ENCODE measurements at regions of chr21 and their contacts with region 1.

Region 1: GRCh38 chr21:45554477-45555175 is 12.4 kb upstream of the SLC19A1 start:
- DNase-seq: peak; percentile 28
- ATAC-seq: peak; percentile 78
- H3K4me3 ChIP-seq: peak overlapping the region; percentile 53 to 69
- H3K27ac ChIP-seq: peak overlapping the region; percentile 63; the same call in 1 of the 2 replicates
- H3K4me1 ChIP-seq: peaks cover 6% of the 10 kb centered on the region
- H3K27me3 ChIP-seq: no peaks in the 10 kb centered on the region
- CTCF ChIP-seq: peak; percentile 81

Region 2: DNA sequence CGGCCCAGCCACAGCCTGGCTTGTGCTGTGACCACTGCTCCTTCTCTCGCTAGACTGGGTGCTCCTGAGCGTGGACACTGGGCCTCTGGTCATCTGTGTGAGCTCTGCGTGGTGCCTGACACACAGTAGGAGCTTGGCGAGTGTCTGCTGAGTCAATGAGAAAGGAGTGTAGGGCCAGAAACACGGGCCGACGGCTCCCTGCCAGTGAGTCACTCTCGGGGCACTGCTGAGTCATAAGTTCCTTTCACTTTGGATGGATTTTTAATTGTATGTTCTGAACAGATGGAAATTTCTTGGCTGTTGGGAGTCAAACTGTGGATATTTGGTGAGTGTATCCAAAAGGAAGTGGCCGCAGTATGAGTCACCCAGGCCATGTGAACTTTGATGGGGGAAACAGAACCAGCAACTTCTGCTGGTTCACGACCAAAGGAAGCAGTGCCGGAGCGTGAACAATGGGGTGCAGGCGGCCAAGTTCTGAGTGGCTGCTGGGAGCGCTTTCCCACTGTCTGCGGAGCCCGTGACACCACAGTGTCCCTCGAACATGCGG is 190.6 kb before region 1 on chr21:
- CTCF ChIA-PET with region 1: no interaction called
- POLR2A ChIA-PET with region 1: no interaction called
- in situ Hi-C with region 1: no loop called
- intact Hi-C with region 1: no loop called
- DNase-seq: peak; percentile 88
- ATAC-seq: peak; percentile 69
- H3K4me3 ChIP-seq: no peak overlapping the region
- H3K27ac ChIP-seq: peak overlapping the region; percentile 93
- H3K4me1 ChIP-seq: peaks cover 70% of the 10 kb centered on the region
- H3K27me3 ChIP-seq: no peaks in the 10 kb centered on the region
- CTCF ChIP-seq: no peak

Region 3: DNA sequence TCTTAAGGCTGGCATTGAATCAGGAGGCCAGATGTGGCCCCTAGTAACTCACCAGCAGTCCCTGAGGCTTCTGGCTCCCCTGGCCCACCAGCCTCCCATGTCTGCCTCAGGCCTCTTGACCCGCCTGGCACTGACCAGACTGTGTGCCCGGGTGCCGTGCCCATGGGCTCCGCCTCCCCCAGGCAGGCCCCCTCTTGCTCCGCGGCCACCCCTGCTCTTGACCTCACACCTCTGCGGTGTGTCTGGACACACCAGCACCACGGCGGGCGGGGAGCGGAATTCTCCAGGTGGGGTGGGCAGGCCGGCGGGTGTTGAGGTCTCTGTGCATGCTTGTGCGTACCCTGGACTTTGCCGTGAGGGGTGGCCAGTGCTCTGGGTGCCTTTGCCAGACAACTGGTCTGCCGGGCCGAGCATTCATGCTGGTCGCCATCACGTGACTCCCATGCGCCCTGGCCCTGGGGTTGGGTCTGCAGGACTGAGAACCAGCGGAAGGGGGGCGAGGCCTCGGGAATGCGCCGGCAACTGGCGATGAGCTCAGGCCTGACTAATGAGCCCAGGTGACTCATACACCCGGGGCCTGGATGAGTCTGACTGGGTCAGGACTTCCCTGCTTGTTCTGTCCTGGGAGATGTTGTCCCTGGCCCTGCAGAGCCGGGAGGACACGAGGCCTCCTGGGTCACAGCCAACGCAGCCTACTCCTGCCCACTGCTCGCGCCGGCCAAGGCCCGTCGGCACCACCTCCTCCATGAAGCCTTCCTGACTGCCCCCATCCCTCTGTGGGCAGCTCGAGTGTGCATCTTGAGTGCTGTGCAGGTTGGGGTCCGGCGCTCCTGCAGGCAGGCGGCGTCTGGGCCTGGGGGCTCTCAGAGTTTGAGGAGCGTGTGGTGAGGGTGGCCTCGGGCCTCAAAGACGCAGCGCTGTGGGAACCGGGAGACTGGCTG is 127.0 kb before region 1 on chr21:
- CTCF ChIA-PET with region 1: no interaction called
- POLR2A ChIA-PET with region 1: no interaction called
- in situ Hi-C with region 1: no loop called
- intact Hi-C with region 1: no loop called
- DNase-seq: peak; percentile 91
- ATAC-seq: peak; percentile 80
- H3K4me3 ChIP-seq: no peak overlapping the region; a peak in 1 of 4 replicates
- H3K27ac ChIP-seq: peak overlapping the region; percentile 89
- H3K4me1 ChIP-seq: peaks cover 90% of the 10 kb centered on the region
- H3K27me3 ChIP-seq: no peaks in the 10 kb centered on the region
- CTCF ChIP-seq: no peak

Region 4: GRCh38 chr21:45596704-45597318 is 42.2 kb after region 1 on chr21:
- CTCF ChIA-PET with region 1: interaction called, 12 read pairs
- POLR2A ChIA-PET with region 1: interaction called, 12 read pairs
- in situ Hi-C with region 1: no loop called
- intact Hi-C with region 1: loop called (anchors 2 kb)
- DNase-seq: peak; percentile 35
- ATAC-seq: peak; percentile 92
- H3K4me3 ChIP-seq: no peak overlapping the region
- H3K27ac ChIP-seq: no peak overlapping the region
- H3K4me1 ChIP-seq: no peaks in the 10 kb centered on the region
- H3K27me3 ChIP-seq: no peaks in the 10 kb centered on the region
- CTCF ChIP-seq: peak; percentile 89

Region 5: GRCh38 chr21:45748598-45748997 is 194.0 kb after region 1 on chr21:
- CTCF ChIA-PET with region 1: no interaction called
- POLR2A ChIA-PET with region 1: no interaction called
- in situ Hi-C with region 1: no loop called
- intact Hi-C with region 1: no loop called
- DNase-seq: no peak
- ATAC-seq: no peak
- H3K4me3 ChIP-seq: no peak overlapping the region
- H3K27ac ChIP-seq: no peak overlapping the region
- H3K4me1 ChIP-seq: no peaks in the 10 kb centered on the region
- H3K27me3 ChIP-seq: 0 out of 2 replicates have a peak, but pooled peaks cover 2% of the 10 kb centered on the region
- CTCF ChIP-seq: no peak

Region 6: GRCh38 chr21:45820171-45821091 is 265.8 kb after region 1 on chr21:
- CTCF ChIA-PET with region 1: interaction called, 10 read pairs
- POLR2A ChIA-PET with region 1: interaction called, 11 read pairs
- in situ Hi-C with region 1: no loop called
- intact Hi-C with region 1: loop called (anchors 1 kb)
- DNase-seq: no peak
- ATAC-seq: peak; percentile 92
- H3K4me3 ChIP-seq: no peak overlapping the region
- H3K27ac ChIP-seq: no peak overlapping the region
- H3K4me1 ChIP-seq: no peaks in the 10 kb centered on the region; the same call in 1 of the 2 replicates
- H3K27me3 ChIP-seq: no peaks in the 10 kb centered on the region
- CTCF ChIP-seq: peak; percentile 81

Region 7: DNA sequence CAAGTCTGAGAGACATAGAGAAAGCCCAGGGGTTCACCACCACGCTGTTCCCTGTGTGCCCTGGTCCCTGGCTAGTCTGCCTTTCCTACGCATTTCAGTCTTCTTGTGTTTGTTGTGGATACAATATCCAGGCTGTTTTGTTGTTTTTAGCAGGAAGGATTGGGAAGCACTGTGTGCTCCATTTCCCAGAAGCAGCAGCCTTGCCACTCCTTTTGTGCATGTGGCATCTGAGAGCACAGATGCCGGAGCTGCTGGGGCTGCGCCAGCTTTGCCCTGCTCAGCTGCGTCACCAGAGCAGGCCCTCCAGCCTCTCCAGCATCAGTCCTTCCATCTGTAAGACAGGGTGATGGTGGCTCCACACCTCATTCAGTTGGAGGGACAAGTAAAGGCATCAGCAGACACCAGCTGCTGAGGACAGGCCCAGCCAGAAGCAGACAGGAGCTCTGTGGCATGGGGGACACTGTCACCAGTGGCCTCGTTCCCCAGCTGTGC is 332.5 kb after region 1 on chr21:
- CTCF ChIA-PET with region 1: no interaction called
- POLR2A ChIA-PET with region 1: interaction called, 11 read pairs
- in situ Hi-C with region 1: no loop called
- intact Hi-C with region 1: no loop called
- DNase-seq: no peak
- ATAC-seq: no peak
- H3K4me3 ChIP-seq: no peak overlapping the region
- H3K27ac ChIP-seq: no peak overlapping the region
- H3K4me1 ChIP-seq: no peaks in the 10 kb centered on the region
- H3K27me3 ChIP-seq: no peaks in the 10 kb centered on the region
- CTCF ChIP-seq: no peak